A549 (cell line): ENCODE measurements at regions of chr14 and their contacts with region 1.

Region 1: DNA sequence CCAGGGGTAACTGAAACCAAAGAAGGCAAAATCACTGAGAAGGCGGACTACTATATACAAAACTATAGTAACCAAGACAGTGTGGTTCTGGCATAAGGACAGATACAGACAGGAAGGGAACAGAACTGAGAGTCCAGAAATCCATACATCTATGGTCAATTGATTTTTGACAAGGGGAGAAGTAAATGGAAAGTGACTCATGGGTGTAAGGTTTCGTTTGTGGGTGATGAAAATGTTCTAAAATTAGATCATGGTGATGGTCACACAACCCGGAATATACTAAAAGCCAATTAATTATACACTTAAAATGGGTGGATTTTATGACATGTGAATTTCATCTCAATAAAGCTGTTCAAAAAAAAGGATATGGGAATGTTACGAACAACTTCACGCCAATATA is 18.7 kb downstream of the ANGEL1 start:
- DNase-seq: no peak
- ATAC-seq: no peak
- H3K4me3 ChIP-seq: no peak overlapping the region
- H3K27ac ChIP-seq: no peak overlapping the region
- H3K4me1 ChIP-seq: no peaks in the 10 kb centered on the region
- CTCF ChIP-seq: no peak
- EP300 ChIP-seq: no peak
- POLR2A ChIP-seq: no peak
- RAD21 ChIP-seq: no peak

Region 2: DNA sequence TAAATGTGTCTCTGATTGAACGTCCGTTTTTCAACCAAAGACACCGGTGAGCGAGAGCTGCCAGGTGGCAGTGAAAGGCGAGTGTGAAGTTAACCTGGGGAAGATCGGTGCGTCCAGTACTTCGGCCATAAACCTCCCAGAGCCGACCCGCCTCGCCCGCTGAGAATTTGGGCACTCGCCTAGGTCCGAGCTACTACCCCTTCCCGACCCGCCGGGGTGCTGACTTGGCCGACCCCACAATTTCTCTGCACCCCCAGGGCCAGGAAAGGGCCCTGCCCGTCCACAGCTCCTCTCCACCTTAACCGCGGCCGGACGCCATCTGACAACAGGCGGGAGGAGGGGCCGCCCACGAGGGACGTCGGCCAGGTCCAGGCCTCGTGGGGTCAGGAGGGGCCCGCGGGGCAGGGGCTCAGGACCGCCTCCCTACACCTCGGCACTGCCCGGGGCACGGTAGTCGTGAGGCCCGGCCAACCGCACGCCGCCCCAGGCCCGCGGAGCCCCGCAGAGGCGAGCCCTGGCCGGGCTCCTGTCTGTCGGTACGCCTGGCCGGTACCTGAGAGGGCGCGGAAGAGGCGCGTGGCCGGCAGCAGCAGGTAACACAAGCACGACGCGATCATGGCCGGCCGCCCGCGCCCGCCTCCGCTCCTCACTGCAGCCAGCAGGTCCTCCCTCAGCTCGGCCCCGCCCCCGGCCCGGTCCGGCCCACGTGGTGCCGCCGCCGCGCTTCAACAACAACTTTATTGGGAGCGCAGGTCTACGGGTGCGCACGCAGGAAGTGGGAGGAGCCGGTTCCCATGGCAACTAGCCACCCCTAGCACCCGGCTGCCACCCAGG is 18.5 kb after region 1 on chr14 and contains the start of gene ANGEL1:
- CTCF ChIA-PET with region 1: interaction called, 11 read pairs
- POLR2A ChIA-PET with region 1: no interaction called
- DNase-seq: peak; percentile 79 to 96
- ATAC-seq: peak; percentile 87 to 96
- H3K4me3 ChIP-seq: peak within 1 kb of the TSS; percentile 70
- H3K27ac ChIP-seq: peak within 1 kb of the TSS; percentile 82 to 96
- H3K4me1 ChIP-seq: peaks cover 11% of the 10 kb centered on the region; the same call in 2 of the 3 replicates
- CTCF ChIP-seq: no peak
- EP300 ChIP-seq: no peak
- POLR2A ChIP-seq: peak; percentile 89
- RAD21 ChIP-seq: no peak
- polyA plus RNA-seq, gene ANGEL1: 17.6 and 22.2 TPM in 2 replicates